Dorsolateral prefrontal cortex (tissue), 120 donors: ENCODE measurements at regions of chrX and their contacts with region 1.

Region 1: DNA sequence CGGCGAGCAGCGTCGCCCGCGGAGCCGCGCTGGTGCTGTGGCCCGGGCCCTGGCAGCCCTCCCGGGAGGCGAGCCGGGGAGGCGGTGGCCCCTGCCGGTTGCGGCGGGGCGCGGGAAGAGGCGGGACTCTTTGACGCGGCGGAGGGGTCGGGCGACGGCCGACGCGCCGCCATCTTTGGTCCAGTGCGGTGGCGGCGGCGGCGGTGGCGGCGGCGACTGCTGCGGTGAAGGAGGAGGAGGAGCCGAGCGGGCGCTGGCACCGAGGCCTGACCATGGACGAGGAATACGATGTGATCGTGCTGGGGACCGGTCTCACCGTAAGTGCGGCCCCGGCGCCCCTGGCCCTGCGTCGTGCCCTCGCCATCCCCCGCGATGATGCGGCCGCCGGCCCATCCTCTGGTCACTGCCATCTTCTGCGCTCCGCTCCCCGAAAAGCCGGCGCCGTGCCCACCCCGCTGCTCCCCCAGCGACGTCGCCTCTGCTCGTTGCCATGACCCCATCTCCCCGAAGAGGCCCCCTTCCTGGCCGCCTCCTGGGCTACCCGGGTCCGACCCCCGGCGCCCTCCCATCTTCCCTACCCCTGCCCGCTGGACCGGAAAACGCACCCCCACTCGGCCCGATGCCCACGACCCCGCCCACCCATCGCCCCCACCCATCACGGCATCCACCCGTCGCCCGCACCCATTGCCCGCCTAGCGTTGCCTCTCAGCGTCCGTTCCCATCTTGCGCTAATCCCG is at the start of gene GDI1:
- DNase-seq: peak in 2 of 10 donors; percentile 62 to 63
- H3K4me3 ChIP-seq: peak within 1 kb of the TSS; percentile 39 to 84 (median 73)
- H3K27ac ChIP-seq: peak within 1 kb of the TSS; percentile 66 to 97 (median 91)
- H3K27me3 ChIP-seq: peaks cover 0 to 70% (median 6%) of the 10 kb centered on the region in 45 donors
- CTCF ChIP-seq: no peak
- total RNA-seq, gene GDI1: 314 to 772 (median 582) TPM

Region 2: GRCh38 chrX:154397819-154398724 is 39.1 kb before region 1 on chrX and contains the start of gene RPL10:
- intact Hi-C with region 1: loop called (anchors 5 kb)
- DNase-seq: peak; percentile 85 to 96 (median 94)
- H3K4me3 ChIP-seq: peak within 1 kb of the TSS; percentile 53 to 90 (median 74)
- H3K27ac ChIP-seq: peak within 1 kb of the TSS; percentile 86 to 99 (median 96)
- H3K27me3 ChIP-seq: peaks cover 0 to 50% (median 3%) of the 10 kb centered on the region in 45 donors
- CTCF ChIP-seq: peak in 2 of 56 donors; percentile 10 to 22
- total RNA-seq, gene RPL10: 412 to 1,036 (median 652) TPM

Region 3: GRCh38 chrX:154478728-154479622 is 41.8 kb after region 1 on chrX and contains the start of gene LAGE3:
- intact Hi-C with region 1: loop called in 1 of 2 experiments (anchors 2 kb)
- DNase-seq: peak; percentile 83 to 96 (median 91)
- H3K4me3 ChIP-seq: peak within 1 kb of the TSS; percentile 37 to 70 (median 58)
- H3K27ac ChIP-seq: peak within 1 kb of the TSS; percentile 18 to 93 (median 86)
- H3K27me3 ChIP-seq: peaks cover 0 to 69% (median 5%) of the 10 kb centered on the region in 45 donors
- CTCF ChIP-seq: peak in 5 of 56 donors; percentile 7 to 14 (median 11)
- total RNA-seq, gene LAGE3: 21.6 to 55.2 (median 36.1) TPM

Region 4: GRCh38 chrX:154486396-154487207 is 49.5 kb after region 1 on chrX and contains the start of gene UBL4A:
- intact Hi-C with region 1: loop called (anchors 2 kb)
- DNase-seq: peak in 5 of 10 donors; percentile 54 to 72 (median 66)
- H3K4me3 ChIP-seq: peak within 1 kb of the TSS; percentile 42 to 80 (median 62)
- H3K27ac ChIP-seq: peak within 1 kb of the TSS; percentile 38 to 93 (median 85)
- H3K27me3 ChIP-seq: peaks cover 0 to 49% (median 7%) of the 10 kb centered on the region in 45 donors
- CTCF ChIP-seq: no peak
- total RNA-seq, gene UBL4A: 30.3 to 72.2 (median 51.7) TPM

Region 5: DNA sequence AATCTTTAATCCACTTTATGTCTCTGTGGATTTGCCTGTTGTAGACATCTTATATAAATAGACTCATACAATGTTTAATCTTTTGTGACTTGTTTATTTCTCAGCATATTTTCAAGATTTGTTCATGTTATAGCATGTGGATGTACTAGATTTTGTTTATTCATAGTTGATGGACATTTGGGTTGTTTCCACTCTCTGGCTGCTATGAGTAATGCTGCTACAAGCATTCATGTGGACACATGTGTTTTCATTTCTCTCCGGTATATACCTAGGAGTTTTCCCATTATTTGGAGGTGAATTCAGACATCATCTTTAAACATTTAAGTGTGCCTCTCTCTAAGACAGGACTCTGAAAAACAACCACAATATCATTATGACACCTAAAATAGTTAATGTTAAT is 112.6 kb after region 1 on chrX:
- intact Hi-C with region 1: no loop called
- DNase-seq: no peak
- H3K4me3 ChIP-seq: no peak overlapping the region
- H3K27ac ChIP-seq: no peak overlapping the region
- H3K27me3 ChIP-seq: peaks cover 0 to 51% (median 9%) of the 10 kb centered on the region in 45 donors
- CTCF ChIP-seq: no peak